ENCODE measurements at regions of chr2 and their contacts with region 1.

Region 1: GRCh38 chr2:25362049-25362433 is 20.3 kb upstream of the DNMT3A start:
- DNase-seq: peak; percentile 95
- ATAC-seq: peak; percentile 83
- H3K4me3 ChIP-seq: peak overlapping the region; percentile 58 to 91 (median 72)
- H3K4me3 Mint-ChIP-seq: peak overlapping the region; percentile 89
- H3K27ac ChIP-seq: peak overlapping the region; percentile 97 to 98
- H3K27ac Mint-ChIP-seq: peak overlapping the region; percentile 96
- H3K4me1 ChIP-seq: peaks cover 7 to 18% of the 10 kb centered on the region in 2 donors
- H3K4me1 Mint-ChIP-seq: peaks cover 28% of the 10 kb centered on the region
- H3K27me3 ChIP-seq: no peaks in the 10 kb centered on the region
- H3K27me3 Mint-ChIP-seq: no peaks in the 10 kb centered on the region
- CTCF ChIP-seq: peak; percentile 93

Region 2: GRCh38 chr2:25228848-25229278 is 133.2 kb before region 1 on chr2:
- CTCF ChIA-PET with region 1: interaction called, 11 read pairs
- POLR2A ChIA-PET with region 1: no interaction called
- intact Hi-C with region 1: no loop called
- DNase-seq: peak; percentile 79
- ATAC-seq: peak; percentile 74
- H3K4me3 ChIP-seq: no peak overlapping the region
- H3K4me3 Mint-ChIP-seq: no peak overlapping the region
- H3K27ac ChIP-seq: no peak overlapping the region
- H3K27ac Mint-ChIP-seq: peak overlapping the region; percentile 15
- H3K4me1 ChIP-seq: peaks cover 7 to 14% of the 10 kb centered on the region in 2 donors
- H3K4me1 Mint-ChIP-seq: peaks cover 19% of the 10 kb centered on the region
- H3K27me3 ChIP-seq: no peaks in the 10 kb centered on the region
- H3K27me3 Mint-ChIP-seq: no peaks in the 10 kb centered on the region
- CTCF ChIP-seq: peak; percentile 63

Region 3: GRCh38 chr2:25342372-25343186 is 19.5 kb before region 1 on chr2:
- CTCF ChIA-PET with region 1: interaction called, 19 read pairs
- POLR2A ChIA-PET with region 1: no interaction called
- intact Hi-C with region 1: loop called (anchors 1 kb)
- DNase-seq: peak; percentile 90
- ATAC-seq: peak; percentile 91
- H3K4me3 ChIP-seq: peak overlapping the region in 4 of 5 experiments; percentile 37 to 70 (median 55)
- H3K4me3 Mint-ChIP-seq: peak overlapping the region; percentile 85
- H3K27ac ChIP-seq: no peak overlapping the region
- H3K27ac Mint-ChIP-seq: peak overlapping the region; percentile 87
- H3K4me1 ChIP-seq: peaks cover 8 to 10% of the 10 kb centered on the region in 2 donors
- H3K4me1 Mint-ChIP-seq: peaks cover 20% of the 10 kb centered on the region
- H3K27me3 ChIP-seq: peaks cover 0 to 4% (median 1%) of the 10 kb centered on the region in 4 experiments
- H3K27me3 Mint-ChIP-seq: no peaks in the 10 kb centered on the region
- CTCF ChIP-seq: peak; percentile 96

Region 4: DNA sequence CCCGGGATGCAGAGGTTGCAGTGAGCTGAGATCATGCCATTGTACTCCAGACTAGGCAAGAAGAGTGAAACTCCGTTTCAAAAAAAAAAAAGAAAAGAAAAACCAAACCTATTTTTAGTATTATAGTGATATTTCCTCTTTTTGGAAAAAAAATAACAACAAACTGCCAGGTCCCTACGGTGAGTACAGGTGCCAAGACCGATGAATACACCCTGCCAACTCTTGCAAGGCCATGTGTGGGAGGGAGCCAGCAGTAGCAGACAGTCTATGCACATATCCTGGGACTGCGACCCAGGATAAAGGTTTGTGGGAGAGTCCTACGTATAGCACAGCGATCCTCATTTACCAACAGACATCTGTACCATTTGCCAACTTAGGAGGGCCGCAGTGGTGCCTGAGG is 49.2 kb after region 1 on chr2:
- CTCF ChIA-PET with region 1: interaction called, 33 read pairs
- POLR2A ChIA-PET with region 1: no interaction called
- intact Hi-C with region 1: loop called (anchors 2 kb)
- DNase-seq: peak; percentile 68
- ATAC-seq: peak; percentile 68
- H3K4me3 ChIP-seq: peak overlapping the region in 1 of 5 experiments; percentile 37
- H3K4me3 Mint-ChIP-seq: peak overlapping the region; percentile 62
- H3K27ac ChIP-seq: peak overlapping the region; percentile 58 to 68
- H3K27ac Mint-ChIP-seq: peak overlapping the region; percentile 86
- H3K4me1 ChIP-seq: peaks cover 46 to 61% of the 10 kb centered on the region in 2 donors
- H3K4me1 Mint-ChIP-seq: peaks cover 58% of the 10 kb centered on the region
- H3K27me3 ChIP-seq: no peaks in the 10 kb centered on the region
- H3K27me3 Mint-ChIP-seq: no peaks in the 10 kb centered on the region
- CTCF ChIP-seq: no peak

Region 5: DNA sequence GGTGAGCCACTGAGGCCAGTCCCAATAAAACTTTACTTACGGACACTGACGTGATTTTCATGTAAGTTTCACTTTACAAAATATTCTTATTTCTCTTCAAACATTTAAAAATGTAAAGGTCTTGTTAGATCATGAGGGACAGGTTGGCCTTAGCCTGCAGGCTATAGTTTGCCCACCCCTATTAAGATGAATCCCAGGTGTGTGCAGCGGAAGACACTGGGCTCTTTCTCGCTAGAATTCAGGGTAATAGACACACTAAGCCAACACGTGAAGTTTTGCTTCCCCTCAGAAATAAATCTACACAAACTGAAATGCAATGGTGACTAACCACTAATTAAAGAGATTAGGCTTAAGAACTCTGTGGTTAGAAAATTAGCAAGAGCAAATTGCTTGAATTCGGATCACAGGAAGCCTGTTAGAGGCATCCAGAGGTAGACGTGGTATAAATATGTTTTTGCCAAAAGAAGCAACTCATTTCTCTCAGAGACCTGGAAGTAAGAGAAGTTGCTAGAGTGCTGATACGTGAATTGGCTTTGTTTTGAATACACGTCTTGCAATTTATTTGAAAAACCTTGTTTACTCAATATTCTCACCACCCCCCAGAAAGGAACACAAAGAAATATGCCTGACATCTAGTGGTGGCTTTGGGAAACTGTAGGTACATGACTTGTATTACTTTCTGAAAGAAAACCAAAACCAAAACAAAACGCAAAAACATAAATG is 159.8 kb after region 1 on chr2:
- CTCF ChIA-PET with region 1: interaction called, 13 read pairs
- POLR2A ChIA-PET with region 1: no interaction called
- intact Hi-C with region 1: loop called (anchors 1 kb)
- DNase-seq: peak; percentile 87
- ATAC-seq: peak; percentile 100
- H3K4me3 ChIP-seq: peak overlapping the region in 2 of 5 experiments; percentile 19 to 35
- H3K4me3 Mint-ChIP-seq: peak overlapping the region; percentile 3
- H3K27ac ChIP-seq: no peak overlapping the region
- H3K27ac Mint-ChIP-seq: no peak overlapping the region
- H3K4me1 ChIP-seq: peaks cover 7 to 16% of the 10 kb centered on the region in 2 donors
- H3K4me1 Mint-ChIP-seq: peaks cover 19% of the 10 kb centered on the region
- H3K27me3 ChIP-seq: no peaks in the 10 kb centered on the region
- H3K27me3 Mint-ChIP-seq: no peaks in the 10 kb centered on the region
- CTCF ChIP-seq: peak; percentile 84

Region 6: GRCh38 chr2:25673300-25674076 is 311.4 kb after region 1 on chr2 and contains the start of gene DTNB:
- CTCF ChIA-PET with region 1: no interaction called
- POLR2A ChIA-PET with region 1: no interaction called
- intact Hi-C with region 1: loop called (anchors 5 kb)
- DNase-seq: peak; percentile 89
- ATAC-seq: peak; percentile 74
- H3K4me3 ChIP-seq: peak within 1 kb of the TSS; percentile 75 to 85 (median 82)
- H3K4me3 Mint-ChIP-seq: peak within 1 kb of the TSS; percentile 94
- H3K27ac ChIP-seq: peak within 1 kb of the TSS; percentile 59 to 71
- H3K27ac Mint-ChIP-seq: peak within 1 kb of the TSS; percentile 91
- H3K4me1 ChIP-seq: peaks cover 8 to 16% of the 10 kb centered on the region in 2 donors
- H3K4me1 Mint-ChIP-seq: peaks cover 16% of the 10 kb centered on the region
- H3K27me3 ChIP-seq: peaks cover 0 to 2% (median 0%) of the 10 kb centered on the region in 4 experiments
- H3K27me3 Mint-ChIP-seq: no peaks in the 10 kb centered on the region
- CTCF ChIP-seq: no peak
- total RNA-seq, gene DTNB: 37.3 and 45.8 TPM in 2 replicates

Measured in B cell (primary cell).